ENCODE measurements at regions of chr3 and their contacts with region 1.

Region 1: GRCh38 chr3:9302425-9303181 is 53.2 kb upstream of the SRGAP3 start:
- DNase-seq: peak; percentile 81
- H3K4me3 Mint-ChIP-seq: no peak overlapping the region
- H3K27ac Mint-ChIP-seq: no peak overlapping the region
- H3K4me1 Mint-ChIP-seq: peaks cover 16% of the 10 kb centered on the region
- H3K27me3 Mint-ChIP-seq: peaks cover 4% of the 10 kb centered on the region

Region 2: GRCh38 chr3:8769088-8769822 is 533.3 kb before region 1 on chr3 and contains the start of gene OXTR:
- CTCF ChIA-PET with region 1: no interaction called
- intact Hi-C with region 1: loop called (anchors 1 kb)
- DNase-seq: peak; percentile 62
- H3K4me3 Mint-ChIP-seq: peak within 1 kb of the TSS; percentile 36
- H3K27ac Mint-ChIP-seq: no peak within 1 kb of the TSS
- H3K4me1 Mint-ChIP-seq: peaks cover 14% of the 10 kb centered on the region
- H3K27me3 Mint-ChIP-seq: peaks cover 44% of the 10 kb centered on the region
- total RNA-seq, gene OXTR: 0.57 to 0.74 TPM

Region 3: DNA sequence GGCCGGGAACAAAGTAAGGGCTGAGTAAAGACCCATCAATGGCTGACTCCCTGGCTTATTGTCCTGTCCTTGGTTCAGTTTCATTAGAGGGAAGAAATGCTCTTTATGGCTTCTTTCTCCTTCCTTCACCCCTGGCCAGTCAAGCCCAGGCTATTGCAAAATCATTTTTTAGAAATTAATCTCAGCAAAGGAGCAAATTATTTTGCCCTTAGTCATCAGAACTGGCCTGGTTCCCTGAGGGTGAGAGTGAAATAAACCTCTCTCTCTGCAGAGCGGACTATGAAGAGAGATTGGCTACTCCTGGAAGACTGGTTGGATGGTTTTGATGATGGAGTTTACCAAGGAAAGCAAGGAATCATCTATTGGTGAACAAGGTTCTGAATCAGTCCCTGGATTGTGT is 480.5 kb before region 1 on chr3:
- CTCF ChIA-PET with region 1: no interaction called
- intact Hi-C with region 1: no loop called
- DNase-seq: no peak
- H3K4me3 Mint-ChIP-seq: no peak overlapping the region
- H3K27ac Mint-ChIP-seq: no peak overlapping the region
- H3K4me1 Mint-ChIP-seq: no peaks in the 10 kb centered on the region
- H3K27me3 Mint-ChIP-seq: peaks cover 2% of the 10 kb centered on the region

Region 4: DNA sequence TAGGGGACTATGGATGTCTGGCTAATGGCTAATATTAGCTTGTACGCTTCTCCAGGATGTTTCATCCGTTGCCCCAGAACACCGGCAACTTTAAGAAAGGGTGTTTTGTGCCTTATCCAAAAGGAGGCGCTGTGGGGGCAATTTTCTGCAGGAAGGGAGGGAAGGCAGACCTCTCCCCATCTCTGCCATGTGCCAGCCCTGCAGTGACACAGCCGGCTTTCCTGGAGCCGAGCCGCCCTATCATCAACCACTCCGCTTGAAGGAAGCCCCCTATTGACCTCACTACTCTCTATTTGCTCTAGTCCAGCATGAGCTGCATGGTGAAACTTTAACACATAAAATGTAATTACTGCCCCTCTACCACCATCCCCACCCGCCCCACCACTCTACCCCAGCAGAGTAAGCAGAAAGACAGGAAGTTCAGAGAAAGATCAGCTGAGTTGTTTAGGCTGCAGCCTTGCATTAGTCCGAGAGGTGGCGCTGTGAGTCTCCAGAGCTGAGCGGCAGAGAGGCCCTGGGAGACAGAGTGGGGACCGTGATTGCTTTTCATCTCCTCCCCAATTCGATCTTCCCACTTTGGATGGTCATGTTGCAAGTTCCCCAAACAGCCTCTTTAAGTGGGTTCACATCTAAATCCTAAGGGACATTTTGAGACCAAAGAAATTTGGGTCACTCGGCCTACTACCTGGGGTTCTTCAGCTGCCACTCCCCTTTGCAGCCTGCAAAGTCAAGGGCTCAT is 314.8 kb before region 1 on chr3:
- CTCF ChIA-PET with region 1: interaction called, 85 read pairs
- intact Hi-C with region 1: loop called (anchors 1 kb)
- DNase-seq: peak; percentile 84
- H3K4me3 Mint-ChIP-seq: no peak overlapping the region
- H3K27ac Mint-ChIP-seq: no peak overlapping the region
- H3K4me1 Mint-ChIP-seq: peaks cover 3% of the 10 kb centered on the region
- H3K27me3 Mint-ChIP-seq: no peaks in the 10 kb centered on the region

Region 5: GRCh38 chr3:9067352-9067975 is 235.1 kb before region 1 on chr3:
- CTCF ChIA-PET with region 1: interaction called, 4 read pairs
- intact Hi-C with region 1: loop called (anchors 2 kb)
- DNase-seq: peak; percentile 57
- H3K4me3 Mint-ChIP-seq: no peak overlapping the region
- H3K27ac Mint-ChIP-seq: no peak overlapping the region
- H3K4me1 Mint-ChIP-seq: no peaks in the 10 kb centered on the region
- H3K27me3 Mint-ChIP-seq: no peaks in the 10 kb centered on the region

Region 6: DNA sequence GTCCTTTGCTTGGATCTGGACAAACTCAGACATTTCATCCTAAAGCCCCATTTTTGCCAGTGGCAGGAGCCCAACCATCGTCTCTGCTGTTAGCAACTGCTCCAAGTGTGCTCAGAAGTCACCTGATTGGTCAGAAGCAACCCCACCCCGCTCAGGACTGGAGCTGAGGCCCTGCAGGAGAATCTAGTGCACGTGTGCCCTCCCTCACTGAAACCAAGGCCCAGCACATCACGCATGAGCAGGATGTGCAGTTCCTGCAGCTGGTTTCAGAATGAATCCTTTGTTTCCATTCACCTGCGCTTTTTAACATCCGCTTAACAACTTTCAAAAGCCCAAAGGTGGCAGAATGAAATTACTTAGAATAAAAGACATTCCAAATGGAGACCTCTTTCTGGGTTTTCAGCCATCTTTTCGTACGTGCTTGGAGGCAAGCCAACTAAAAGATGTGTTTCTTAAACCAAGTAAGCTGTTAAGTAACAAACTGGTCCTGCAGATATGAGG is 134.3 kb before region 1 on chr3:
- CTCF ChIA-PET with region 1: no interaction called
- intact Hi-C with region 1: loop called (anchors 1 kb)
- DNase-seq: peak; percentile 85
- H3K4me3 Mint-ChIP-seq: no peak overlapping the region
- H3K27ac Mint-ChIP-seq: peak overlapping the region; percentile 17
- H3K4me1 Mint-ChIP-seq: peaks cover 4% of the 10 kb centered on the region
- H3K27me3 Mint-ChIP-seq: no peaks in the 10 kb centered on the region

Region 7: GRCh38 chr3:9249273-9250192 is 53.1 kb before region 1 on chr3 and contains the start of gene SRGAP3:
- CTCF ChIA-PET with region 1: interaction called, 11 read pairs
- intact Hi-C with region 1: no loop called
- DNase-seq: peak; percentile 86
- H3K4me3 Mint-ChIP-seq: peak within 1 kb of the TSS; percentile 77
- H3K27ac Mint-ChIP-seq: peak within 1 kb of the TSS; percentile 28
- H3K4me1 Mint-ChIP-seq: peaks cover 17% of the 10 kb centered on the region
- H3K27me3 Mint-ChIP-seq: no peaks in the 10 kb centered on the region
- total RNA-seq, gene SRGAP3: 2.4 to 2.5 TPM

Region 8: GRCh38 chr3:9316881-9317361 is 14.3 kb after region 1 on chr3:
- CTCF ChIA-PET with region 1: interaction called, 13 read pairs
- intact Hi-C with region 1: no loop called
- DNase-seq: no peak
- H3K4me3 Mint-ChIP-seq: no peak overlapping the region
- H3K27ac Mint-ChIP-seq: no peak overlapping the region
- H3K4me1 Mint-ChIP-seq: no peaks in the 10 kb centered on the region
- H3K27me3 Mint-ChIP-seq: no peaks in the 10 kb centered on the region

Region 9: DNA sequence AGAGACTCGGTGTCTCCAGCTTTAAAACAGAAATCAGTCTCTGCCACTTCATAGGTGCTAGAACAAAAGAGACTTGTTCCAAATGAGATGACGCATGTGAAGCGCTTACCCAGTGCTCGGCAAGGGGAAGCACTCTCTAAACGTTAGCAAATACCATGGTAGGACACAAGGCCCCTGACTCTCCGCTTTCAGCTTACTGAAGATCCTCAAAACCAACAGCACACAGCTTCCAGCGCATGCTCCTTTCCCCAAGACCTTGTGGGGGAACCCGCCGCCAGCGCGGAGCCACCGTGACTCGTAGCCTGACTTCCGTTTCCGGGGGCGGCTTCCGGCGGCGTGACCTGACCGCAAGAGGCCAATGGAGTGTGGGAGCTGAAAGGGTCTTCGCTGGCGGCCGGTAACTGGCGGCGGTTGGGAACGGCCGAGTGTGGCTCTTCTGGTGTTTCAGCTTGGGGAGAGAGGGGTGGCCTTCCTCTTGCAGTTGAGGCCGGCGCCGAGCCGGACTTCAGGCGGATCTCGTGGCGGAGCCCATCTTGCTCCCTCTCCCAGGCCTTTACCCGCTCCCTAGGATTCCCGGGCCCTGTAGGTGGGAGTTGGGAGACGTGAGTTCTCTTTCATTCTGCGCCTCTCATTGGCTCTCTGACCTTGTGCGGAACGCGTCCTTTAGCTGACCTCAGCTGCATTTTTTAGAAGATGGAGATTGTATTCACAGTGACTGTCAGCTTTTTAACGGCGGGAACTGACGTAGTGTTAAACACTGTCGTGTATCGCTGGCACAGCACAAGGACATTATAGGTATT is 60.3 kb after region 1 on chr3 and contains the start of gene THUMPD3:
- CTCF ChIA-PET with region 1: no interaction called
- intact Hi-C with region 1: no loop called
- DNase-seq: peak; percentile 95
- H3K4me3 Mint-ChIP-seq: peak within 1 kb of the TSS; percentile 98
- H3K27ac Mint-ChIP-seq: peak within 1 kb of the TSS; percentile 99
- H3K4me1 Mint-ChIP-seq: peaks cover 26% of the 10 kb centered on the region
- H3K27me3 Mint-ChIP-seq: no peaks in the 10 kb centered on the region
- total RNA-seq, gene THUMPD3: 46.0 to 48.9 TPM

Measured in activated naive CD4-positive, alpha-beta T cell treated with anti-CD3 and anti-CD28 coated beads for 36 hours (primary cell).